IMR-90 (cell line): ENCODE measurements at regions of chr1 and their contacts with region 1.

Region 1: GRCh38 chr1:179293340-179294327 is at the start of gene SOAT1:
- DNase-seq: peak; percentile 88
- ATAC-seq: peak; percentile 98
- H3K4me3 ChIP-seq: peak within 1 kb of the TSS; percentile 85
- H3K27ac ChIP-seq: peak within 1 kb of the TSS; percentile 89
- H3K4me1 ChIP-seq: peaks cover 2% of the 10 kb centered on the region; the same call in 1 of the 2 replicates
- H3K27me3 ChIP-seq: no peaks in the 10 kb centered on the region
- CTCF ChIP-seq: peak; percentile 18; the same call in 1 of the 2 replicates
- POLR2A ChIP-seq: peak; percentile 83
- RAD21 ChIP-seq: no peak; the same call in 1 of the 2 replicates
- total RNA-seq, gene SOAT1: 19.5 and 28.9 TPM in 2 replicates

Region 2: DNA sequence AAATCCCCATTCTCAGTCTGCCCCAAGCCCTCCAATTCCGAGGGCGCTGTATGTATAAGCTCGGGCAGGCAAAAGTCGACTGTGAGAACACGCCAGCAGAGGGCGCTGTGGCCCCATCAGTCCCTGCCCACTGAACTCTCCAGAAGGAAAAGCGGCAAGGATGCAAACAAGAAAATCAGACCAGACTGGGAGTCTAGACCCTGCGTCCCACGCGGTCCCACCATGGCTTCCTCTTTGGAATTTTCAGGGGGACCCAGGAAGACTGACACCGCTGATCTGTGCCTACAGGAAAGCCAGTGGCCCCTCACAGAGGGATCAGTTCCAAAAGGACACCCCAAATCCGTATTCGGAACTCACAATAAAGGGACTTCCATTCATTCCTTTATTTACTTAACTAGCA is 761.2 kb before region 1 on chr1:
- CTCF ChIA-PET with region 1: no interaction called
- POLR2A ChIA-PET with region 1: no interaction called
- dilution Hi-C with region 1: no loop called
- in situ Hi-C with region 1: no loop called
- intact Hi-C with region 1: loop called (anchors 5 kb)
- DNase-seq: peak; percentile 78
- ATAC-seq: peak; percentile 53
- H3K4me3 ChIP-seq: no peak overlapping the region
- H3K27ac ChIP-seq: no peak overlapping the region
- H3K4me1 ChIP-seq: peaks cover 19% of the 10 kb centered on the region
- H3K27me3 ChIP-seq: no peaks in the 10 kb centered on the region
- CTCF ChIP-seq: peak; percentile 92
- POLR2A ChIP-seq: no peak
- RAD21 ChIP-seq: peak; percentile 93

Region 3: DNA sequence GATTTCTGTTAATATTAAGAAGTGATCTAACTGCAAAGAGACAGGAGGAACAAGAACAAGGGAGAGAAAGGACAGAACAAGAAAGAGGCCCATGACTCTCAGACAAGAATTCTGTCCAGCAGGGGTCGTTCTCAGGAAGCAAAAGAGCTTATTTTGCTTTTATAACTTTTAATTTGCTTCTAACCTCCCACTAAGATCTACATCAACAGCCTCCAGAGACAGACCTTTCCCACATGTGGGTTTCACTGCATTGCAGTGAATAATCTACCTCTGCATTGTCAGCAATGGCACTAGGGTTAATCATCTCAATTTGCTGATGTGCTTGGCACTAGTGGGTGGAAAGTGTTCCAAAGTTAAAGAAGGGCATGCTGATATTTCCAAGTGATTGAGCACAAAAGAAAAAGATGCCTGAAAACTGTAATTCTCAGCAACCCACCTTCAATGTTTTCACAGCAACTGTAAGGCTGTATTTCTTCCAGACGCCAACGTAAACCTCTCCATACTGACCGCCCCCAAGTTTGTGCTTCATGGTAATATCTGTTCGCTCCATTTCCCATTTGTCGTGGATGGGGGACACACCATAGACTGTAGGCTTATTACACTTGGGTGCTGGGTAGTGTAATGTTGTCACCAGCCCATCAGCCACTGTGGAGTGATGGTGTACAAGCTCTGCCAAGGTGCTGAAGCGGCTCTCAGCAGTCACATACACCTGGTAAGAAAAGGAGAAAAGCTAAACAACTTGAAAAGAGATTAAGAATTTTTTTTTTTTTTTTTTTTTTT is 172.3 kb before region 1 on chr1:
- CTCF ChIA-PET with region 1: no interaction called
- POLR2A ChIA-PET with region 1: no interaction called
- dilution Hi-C with region 1: no loop called
- in situ Hi-C with region 1: loop called (anchors 10 kb)
- intact Hi-C with region 1: loop called (anchors 2 kb)
- DNase-seq: peak; percentile 62
- ATAC-seq: peak; percentile 66
- H3K4me3 ChIP-seq: no peak overlapping the region
- H3K27ac ChIP-seq: no peak overlapping the region; the same call in 1 of the 2 replicates
- H3K4me1 ChIP-seq: peaks cover 5% of the 10 kb centered on the region
- H3K27me3 ChIP-seq: no peaks in the 10 kb centered on the region
- CTCF ChIP-seq: peak; percentile 64
- POLR2A ChIP-seq: no peak
- RAD21 ChIP-seq: peak; percentile 62

Region 4: GRCh38 chr1:179241523-179242097 is 52.0 kb before region 1 on chr1:
- CTCF ChIA-PET with region 1: no interaction called
- POLR2A ChIA-PET with region 1: no interaction called
- dilution Hi-C with region 1: no loop called
- in situ Hi-C with region 1: no loop called
- intact Hi-C with region 1: no loop called
- DNase-seq: no peak
- ATAC-seq: no peak
- H3K4me3 ChIP-seq: no peak overlapping the region
- H3K27ac ChIP-seq: no peak overlapping the region
- H3K4me1 ChIP-seq: no peaks in the 10 kb centered on the region
- H3K27me3 ChIP-seq: no peaks in the 10 kb centered on the region
- CTCF ChIP-seq: no peak
- POLR2A ChIP-seq: no peak
- RAD21 ChIP-seq: no peak

Region 5: GRCh38 chr1:179251675-179252074 is 42.0 kb before region 1 on chr1:
- CTCF ChIA-PET with region 1: interaction called, 7 read pairs
- POLR2A ChIA-PET with region 1: no interaction called
- dilution Hi-C with region 1: no loop called
- in situ Hi-C with region 1: no loop called
- intact Hi-C with region 1: loop called (anchors 5 kb)
- DNase-seq: peak; percentile 67
- ATAC-seq: peak; percentile 88
- H3K4me3 ChIP-seq: no peak overlapping the region
- H3K27ac ChIP-seq: no peak overlapping the region
- H3K4me1 ChIP-seq: peaks cover 2% of the 10 kb centered on the region; the same call in 1 of the 2 replicates
- H3K27me3 ChIP-seq: no peaks in the 10 kb centered on the region
- CTCF ChIP-seq: peak; percentile 68
- POLR2A ChIP-seq: no peak
- RAD21 ChIP-seq: peak; percentile 73